ENCODE measurements at regions of chr10 and their contacts with region 1.

Region 1: DNA sequence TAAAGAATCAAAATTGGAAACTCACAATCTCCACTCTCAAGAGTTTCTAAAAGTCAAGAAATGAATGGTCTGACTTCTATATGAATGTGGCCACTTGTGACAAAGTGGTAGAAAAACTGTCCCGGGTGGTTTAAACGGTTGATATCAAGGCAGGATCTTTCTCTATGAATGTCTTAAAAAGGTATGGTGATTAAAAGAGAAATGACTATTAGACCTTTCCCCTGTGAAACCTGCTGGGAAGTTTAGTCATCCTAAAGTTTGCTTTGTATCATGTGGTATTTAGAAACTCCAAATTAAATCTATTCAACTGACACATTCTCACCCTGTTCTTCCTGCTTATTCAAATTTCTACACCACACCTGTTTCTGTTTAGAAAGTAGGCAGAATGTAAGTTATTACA is 492.5 kb downstream of the XPNPEP1 start:
- DNase-seq: no peak
- ATAC-seq: no peak
- H3K4me3 Mint-ChIP-seq: no peak overlapping the region
- H3K27ac Mint-ChIP-seq: no peak overlapping the region
- H3K4me1 Mint-ChIP-seq: peaks cover 10% of the 10 kb centered on the region
- H3K27me3 Mint-ChIP-seq: no peaks in the 10 kb centered on the region
- CTCF ChIP-seq: no peak

Region 2: DNA sequence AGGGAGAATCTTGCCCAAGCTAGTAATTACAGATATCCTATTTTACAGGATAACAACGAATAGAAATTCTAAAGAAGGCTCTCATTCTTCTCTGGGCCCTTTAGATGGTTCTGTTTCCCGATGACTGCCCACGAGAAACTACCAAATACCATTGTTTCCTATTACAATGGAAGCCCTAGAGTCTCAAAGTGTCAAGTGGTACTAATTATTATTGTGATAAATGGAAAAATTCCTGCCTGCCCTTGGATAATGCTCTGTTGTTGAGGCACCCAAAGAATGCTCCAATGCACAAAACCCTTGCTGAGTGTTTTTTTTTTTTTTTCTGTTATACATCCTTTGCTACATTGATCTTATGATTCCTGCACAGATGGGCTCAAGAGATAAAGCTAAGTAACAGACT is 12.0 kb before region 1 on chr10:
- CTCF ChIA-PET with region 1: no interaction called
- POLR2A ChIA-PET with region 1: no interaction called
- DNase-seq: no peak
- ATAC-seq: no peak
- H3K4me3 Mint-ChIP-seq: no peak overlapping the region
- H3K27ac Mint-ChIP-seq: no peak overlapping the region
- H3K4me1 Mint-ChIP-seq: peaks cover 14% of the 10 kb centered on the region
- H3K27me3 Mint-ChIP-seq: no peaks in the 10 kb centered on the region
- CTCF ChIP-seq: no peak

Region 3: DNA sequence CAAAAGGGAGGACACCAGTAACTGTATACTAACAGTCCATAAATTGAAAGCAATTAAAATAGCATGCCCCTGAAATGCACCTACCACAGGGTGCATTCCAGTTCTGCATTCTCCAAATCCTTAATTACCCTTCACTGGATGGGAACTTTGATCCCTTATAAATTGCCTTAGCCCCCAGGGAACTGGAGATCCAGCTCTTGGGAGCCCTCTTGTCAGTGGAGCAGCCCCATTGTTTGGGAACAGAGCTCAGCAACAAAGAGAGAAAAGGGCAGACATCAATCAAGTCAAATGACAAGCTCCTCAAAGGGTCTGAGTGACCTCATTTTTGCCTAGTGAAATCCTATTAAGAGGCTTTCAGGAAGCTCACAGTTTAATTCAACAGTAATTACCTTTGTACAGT is 19.9 kb after region 1 on chr10:
- CTCF ChIA-PET with region 1: interaction called, 11 read pairs
- POLR2A ChIA-PET with region 1: no interaction called
- DNase-seq: no peak
- ATAC-seq: no peak
- H3K4me3 Mint-ChIP-seq: no peak overlapping the region
- H3K27ac Mint-ChIP-seq: no peak overlapping the region
- H3K4me1 Mint-ChIP-seq: peaks cover 16% of the 10 kb centered on the region
- H3K27me3 Mint-ChIP-seq: peaks cover 22% of the 10 kb centered on the region
- CTCF ChIP-seq: no peak

Region 4: DNA sequence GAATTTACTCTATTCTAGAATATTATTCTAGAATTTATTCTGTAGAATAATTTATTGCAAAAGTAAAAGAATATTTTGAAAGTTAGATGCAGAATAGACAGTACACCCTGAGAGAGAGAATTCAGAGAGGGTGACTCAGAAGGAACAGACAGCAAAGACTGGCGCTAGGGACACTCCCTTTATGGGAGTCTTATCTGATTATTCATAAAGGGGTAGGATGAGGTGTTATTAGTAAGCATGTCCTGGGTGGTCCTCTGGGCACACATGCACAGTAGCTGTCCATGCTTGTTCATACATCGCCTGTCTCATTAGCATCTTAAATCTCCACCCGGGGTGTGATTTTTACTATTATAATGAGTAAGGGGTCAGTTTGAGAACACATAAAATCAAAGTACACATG is 392.4 kb after region 1 on chr10:
- CTCF ChIA-PET with region 1: no interaction called
- POLR2A ChIA-PET with region 1: no interaction called
- DNase-seq: no peak
- ATAC-seq: no peak
- H3K4me3 Mint-ChIP-seq: no peak overlapping the region
- H3K27ac Mint-ChIP-seq: no peak overlapping the region
- H3K4me1 Mint-ChIP-seq: peaks cover 4% of the 10 kb centered on the region
- H3K27me3 Mint-ChIP-seq: no peaks in the 10 kb centered on the region
- CTCF ChIP-seq: no peak

Measured in WTC11 (cell line).